Naive thymus-derived CD4-positive, alpha-beta T cell (primary cell): ENCODE measurements at regions of chr10 and their contacts with region 1.

Region 1: DNA sequence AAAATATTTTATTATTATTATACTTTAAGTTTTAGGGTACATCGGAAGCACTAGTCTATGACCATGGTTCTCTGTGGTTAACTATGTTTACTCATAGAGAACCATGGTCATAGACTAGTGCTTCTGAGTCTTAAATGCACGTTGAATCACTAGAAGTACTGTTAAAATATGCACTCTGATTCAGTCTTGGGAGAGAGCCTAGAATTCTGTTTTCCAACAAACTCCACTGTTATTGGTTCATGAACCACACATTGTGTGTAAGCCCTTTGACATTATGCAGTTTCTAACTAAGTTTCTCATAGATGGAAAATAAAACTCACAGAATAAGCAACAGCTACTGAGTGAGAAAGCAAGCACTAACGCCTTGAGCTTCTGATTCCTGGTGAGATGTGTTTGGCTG is 1120.6 kb downstream of the SORCS1 start:
- DNase-seq: no peak
- ATAC-seq: no peak
- H3K4me3 ChIP-seq: no peak overlapping the region
- H3K4me3 Mint-ChIP-seq: no peak overlapping the region
- H3K27ac ChIP-seq: no peak overlapping the region
- H3K27ac Mint-ChIP-seq: no peak overlapping the region
- H3K4me1 ChIP-seq: no peaks in the 10 kb centered on the region
- H3K4me1 Mint-ChIP-seq: no peaks in the 10 kb centered on the region
- H3K27me3 ChIP-seq: no peaks in the 10 kb centered on the region
- H3K27me3 Mint-ChIP-seq: peaks cover 0 to 13% (median 0%) of the 10 kb centered on the region in 5 donors

Region 2: DNA sequence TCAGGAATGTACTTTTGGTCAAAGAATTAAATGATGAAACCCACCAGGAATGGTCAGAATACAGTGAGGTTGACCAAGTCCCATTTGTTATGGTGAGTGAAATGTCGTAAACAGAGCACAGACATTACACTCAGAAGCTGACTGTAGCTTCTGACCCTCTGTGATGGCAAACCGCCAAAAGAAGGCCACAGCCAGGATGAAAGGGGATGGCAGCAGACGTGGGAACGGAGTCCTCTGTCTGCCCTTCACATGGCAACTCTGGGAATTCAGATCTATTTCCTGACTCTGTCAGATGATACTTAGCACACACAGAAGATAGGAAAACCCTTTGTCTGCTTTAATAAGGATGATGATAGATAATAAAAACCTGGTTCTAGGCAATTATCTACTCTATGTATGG is 645.7 kb before region 1 on chr10:
- CTCF ChIA-PET with region 1: no interaction called
- POLR2A ChIA-PET with region 1: no interaction called
- intact Hi-C with region 1: no loop called
- DNase-seq: no peak
- ATAC-seq: no peak
- H3K4me3 ChIP-seq: no peak overlapping the region
- H3K4me3 Mint-ChIP-seq: no peak overlapping the region
- H3K27ac ChIP-seq: no peak overlapping the region
- H3K27ac Mint-ChIP-seq: no peak overlapping the region
- H3K4me1 ChIP-seq: no peaks in the 10 kb centered on the region
- H3K4me1 Mint-ChIP-seq: no peaks in the 10 kb centered on the region
- H3K27me3 ChIP-seq: no peaks in the 10 kb centered on the region
- H3K27me3 Mint-ChIP-seq: peaks cover 0 to 30% (median 11%) of the 10 kb centered on the region in 5 donors

Region 3: DNA sequence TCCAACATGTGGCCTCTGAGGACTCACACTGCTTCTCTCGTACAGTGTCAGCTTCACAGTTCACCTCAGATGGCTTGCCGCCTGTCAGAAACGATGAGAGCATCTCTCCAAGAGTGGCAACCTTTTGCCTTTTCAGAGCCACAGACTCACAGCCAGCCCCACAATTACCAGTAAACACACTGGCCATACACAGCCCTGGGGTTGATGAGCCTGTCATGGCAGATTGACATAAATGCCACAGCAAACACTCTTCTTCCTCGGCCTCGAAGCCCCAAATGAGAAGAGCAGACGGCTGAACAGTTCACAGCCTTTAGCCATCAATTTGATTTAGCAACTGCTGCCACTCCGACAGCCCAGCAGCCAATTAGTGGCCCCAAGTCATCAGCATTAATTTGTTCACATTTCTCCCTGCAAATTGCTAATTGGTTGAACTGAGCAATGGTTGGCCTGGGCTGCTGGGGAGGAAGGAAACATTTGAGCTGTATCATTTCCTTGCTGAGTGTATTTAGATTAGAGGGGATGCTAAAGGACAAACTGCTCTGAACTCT is 259.9 kb before region 1 on chr10:
- CTCF ChIA-PET with region 1: no interaction called
- POLR2A ChIA-PET with region 1: no interaction called
- intact Hi-C with region 1: no loop called
- DNase-seq: no peak
- ATAC-seq: no peak
- H3K4me3 ChIP-seq: no peak overlapping the region
- H3K4me3 Mint-ChIP-seq: no peak overlapping the region
- H3K27ac ChIP-seq: no peak overlapping the region
- H3K27ac Mint-ChIP-seq: no peak overlapping the region
- H3K4me1 ChIP-seq: no peaks in the 10 kb centered on the region
- H3K4me1 Mint-ChIP-seq: no peaks in the 10 kb centered on the region
- H3K27me3 ChIP-seq: peaks cover 0 to 2% of the 10 kb centered on the region in 2 donors
- H3K27me3 Mint-ChIP-seq: peaks cover 0 to 36% (median 13%) of the 10 kb centered on the region in 5 donors

Region 4: DNA sequence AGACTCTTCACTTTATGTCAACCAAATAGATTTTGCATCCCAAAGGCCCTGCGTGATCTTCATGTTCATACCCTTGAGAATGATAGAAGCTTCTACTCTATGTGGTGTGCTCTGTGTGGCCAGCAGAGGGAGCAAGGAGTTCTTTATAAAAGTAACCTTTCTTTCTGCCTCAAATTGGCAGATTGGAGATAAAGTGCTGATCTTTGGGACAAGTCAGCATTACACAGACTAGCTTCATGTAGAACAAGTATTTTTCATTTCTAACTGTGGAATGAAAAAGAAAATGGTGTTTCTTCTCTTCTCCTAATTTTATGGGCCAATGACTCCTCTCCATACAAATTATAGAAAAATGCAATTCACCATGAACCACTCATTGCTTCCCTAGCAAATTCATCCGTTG is 93.5 kb before region 1 on chr10:
- CTCF ChIA-PET with region 1: no interaction called
- POLR2A ChIA-PET with region 1: no interaction called
- intact Hi-C with region 1: no loop called
- DNase-seq: peak in 5 of 9 donors; percentile 2 to 8 (median 5)
- ATAC-seq: no peak
- H3K4me3 ChIP-seq: no peak overlapping the region
- H3K4me3 Mint-ChIP-seq: no peak overlapping the region
- H3K27ac ChIP-seq: no peak overlapping the region
- H3K27ac Mint-ChIP-seq: no peak overlapping the region
- H3K4me1 ChIP-seq: no peaks in the 10 kb centered on the region
- H3K4me1 Mint-ChIP-seq: peaks cover 0 to 4% (median 0%) of the 10 kb centered on the region in 7 donors
- H3K27me3 ChIP-seq: no peaks in the 10 kb centered on the region
- H3K27me3 Mint-ChIP-seq: no peaks in the 10 kb centered on the region

Region 5: GRCh38 chr10:107072028-107072427 is 1028.2 kb after region 1 on chr10:
- CTCF ChIA-PET with region 1: interaction called, 10 read pairs
- POLR2A ChIA-PET with region 1: no interaction called
- intact Hi-C with region 1: no loop called
- DNase-seq: no peak
- ATAC-seq: no peak
- H3K4me3 ChIP-seq: no peak overlapping the region
- H3K4me3 Mint-ChIP-seq: no peak overlapping the region
- H3K27ac ChIP-seq: no peak overlapping the region
- H3K27ac Mint-ChIP-seq: no peak overlapping the region
- H3K4me1 ChIP-seq: no peaks in the 10 kb centered on the region
- H3K4me1 Mint-ChIP-seq: no peaks in the 10 kb centered on the region
- H3K27me3 ChIP-seq: no peaks in the 10 kb centered on the region
- H3K27me3 Mint-ChIP-seq: no peaks in the 10 kb centered on the region